CD8-positive, alpha-beta T cell (primary cell): ENCODE measurements at regions of chr3 and their contacts with region 1.

Region 1: DNA sequence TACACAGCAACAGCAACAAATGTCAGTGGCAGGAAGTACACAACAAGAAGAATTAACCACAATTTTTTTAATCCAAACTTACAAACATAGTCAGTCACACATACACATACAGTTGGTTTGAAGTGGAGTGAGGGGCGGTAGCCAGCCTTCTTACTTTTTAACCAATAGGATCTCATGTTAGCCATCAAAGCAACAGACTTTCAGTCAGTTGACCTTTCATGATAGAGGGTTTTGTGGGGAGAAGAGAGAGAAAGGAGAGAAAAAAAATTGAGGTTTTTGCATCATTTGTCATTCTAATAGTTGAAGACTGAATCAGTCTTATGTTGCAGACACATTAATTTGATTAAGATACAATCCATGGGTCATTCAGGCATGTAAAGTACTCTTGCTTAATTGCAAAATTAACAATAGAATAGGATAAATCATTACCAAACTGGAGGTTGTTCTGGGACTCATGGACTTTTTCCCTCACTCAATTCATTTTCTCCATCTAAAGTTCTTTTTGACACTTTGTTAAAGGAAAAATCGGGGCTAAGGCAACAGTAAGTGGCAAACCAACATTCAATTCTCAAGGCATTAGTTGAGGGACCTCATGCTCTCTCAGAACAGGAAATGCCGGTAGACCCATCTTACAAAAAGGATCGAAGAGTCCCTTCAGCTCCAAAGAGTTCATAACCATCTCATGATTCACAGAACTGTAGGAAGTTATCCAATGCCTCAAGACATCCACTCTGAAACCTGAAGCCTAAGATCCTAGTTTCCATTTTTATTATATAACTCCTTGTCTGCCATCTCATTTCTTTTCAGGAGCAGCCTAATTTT is 159.5 kb upstream of the LPP start:
- DNase-seq: peak in 4 of 9 experiments; percentile 26 to 75 (median 52)
- ATAC-seq: peak; percentile 88
- H3K4me3 ChIP-seq: no peak overlapping the region
- H3K4me3 Mint-ChIP-seq: peak overlapping the region; percentile 2
- H3K27ac ChIP-seq: peak overlapping the region in 1 of 2 experiments; percentile 55
- H3K27ac Mint-ChIP-seq: peak overlapping the region; percentile 50
- H3K4me1 ChIP-seq: peaks cover 33% of the 10 kb centered on the region
- H3K4me1 Mint-ChIP-seq: peaks cover 78% of the 10 kb centered on the region
- H3K27me3 ChIP-seq: no peaks in the 10 kb centered on the region
- H3K27me3 Mint-ChIP-seq: no peaks in the 10 kb centered on the region
- CTCF ChIP-seq: no peak

Region 2: DNA sequence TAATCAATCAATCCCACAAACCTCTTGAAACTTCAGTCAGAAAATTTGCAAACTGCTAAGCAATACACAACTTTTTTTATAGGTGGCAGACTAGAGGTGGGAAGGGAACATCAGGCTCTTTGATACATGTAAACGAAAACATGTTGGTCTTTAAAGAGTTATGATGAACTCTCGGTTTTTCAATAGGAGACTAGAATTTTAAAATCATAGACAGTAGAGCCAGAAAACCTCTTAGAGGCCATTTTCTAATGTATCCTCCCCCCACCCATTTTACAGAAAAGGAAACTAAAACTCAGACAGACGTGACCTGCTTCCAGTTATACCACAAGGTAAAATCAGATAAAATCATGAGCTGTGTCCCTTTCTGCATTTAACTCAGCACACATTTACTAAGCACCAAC is 19.6 kb before region 1 on chr3:
- CTCF ChIA-PET with region 1: no interaction called
- POLR2A ChIA-PET with region 1: interaction called, 4 read pairs
- intact Hi-C with region 1: loop called in 1 of 2 experiments (anchors 2 kb)
- DNase-seq: peak in 2 of 9 experiments; percentile 51 to 63
- ATAC-seq: peak; percentile 65
- H3K4me3 ChIP-seq: peak overlapping the region; percentile 8 to 13
- H3K4me3 Mint-ChIP-seq: peak overlapping the region; percentile 68
- H3K27ac ChIP-seq: peak overlapping the region in 1 of 2 experiments; percentile 56
- H3K27ac Mint-ChIP-seq: peak overlapping the region; percentile 79
- H3K4me1 ChIP-seq: peaks cover 34% of the 10 kb centered on the region
- H3K4me1 Mint-ChIP-seq: peaks cover 51% of the 10 kb centered on the region
- H3K27me3 ChIP-seq: no peaks in the 10 kb centered on the region
- H3K27me3 Mint-ChIP-seq: no peaks in the 10 kb centered on the region
- CTCF ChIP-seq: peak; percentile 58